CD14-positive monocyte (primary cell): ENCODE measurements at regions of chr7 and their contacts with region 1.

Region 1: DNA sequence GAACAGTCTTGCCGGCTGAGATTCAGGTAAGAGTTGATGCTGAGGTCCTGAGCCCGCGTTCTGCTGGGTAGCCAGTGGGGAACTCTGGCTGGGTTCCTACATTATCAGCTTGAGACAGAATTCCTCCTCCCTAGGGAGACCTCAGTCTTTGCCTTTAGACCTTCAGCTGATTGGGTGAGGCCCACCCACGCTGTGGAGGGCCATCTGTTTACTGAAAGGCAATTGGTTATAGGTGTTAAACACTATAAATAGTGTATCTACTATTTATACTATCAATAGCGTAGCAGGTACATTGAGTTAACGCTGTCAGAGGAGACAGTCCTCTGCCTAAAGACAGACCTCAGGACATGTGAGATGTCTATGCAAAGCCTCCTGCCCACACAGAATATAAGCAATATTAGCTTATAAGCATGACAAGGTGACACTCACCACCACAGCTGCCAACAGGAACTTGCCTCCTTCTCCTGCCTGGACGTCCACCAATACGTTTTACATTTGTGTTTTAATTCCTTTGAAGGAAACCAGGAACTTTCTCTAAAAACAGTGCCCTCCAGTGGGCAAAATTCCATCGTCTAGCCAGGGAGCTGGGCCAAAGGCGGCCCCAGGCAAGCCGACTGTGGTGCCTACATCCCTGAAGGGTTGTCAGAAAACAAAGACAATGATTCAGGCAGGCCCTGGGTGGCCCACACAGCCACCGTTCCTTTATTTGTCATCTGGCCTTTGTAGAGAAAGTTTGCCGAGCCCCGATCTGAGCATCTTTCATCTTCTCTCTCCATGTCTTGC is 58.8 kb downstream of the INSIG1 start:
- DNase-seq: peak in 2 of 3 donors; percentile 21 to 36
- H3K4me3 ChIP-seq: peak overlapping the region in 1 of 3 experiments; percentile 48
- H3K4me3 Mint-ChIP-seq: no peak overlapping the region
- H3K27ac ChIP-seq: peak overlapping the region; percentile 41 to 87
- H3K27ac Mint-ChIP-seq: peak overlapping the region; percentile 87 to 97 (median 94)
- H3K4me1 ChIP-seq: peaks cover 51 to 57% of the 10 kb centered on the region in 2 donors
- H3K4me1 Mint-ChIP-seq: peaks cover 51% of the 10 kb centered on the region
- H3K27me3 ChIP-seq: peaks cover 0 to 2% of the 10 kb centered on the region in 2 donors
- H3K27me3 Mint-ChIP-seq: peaks cover 2 to 8% (median 7%) of the 10 kb centered on the region in 3 donors
- CTCF ChIP-seq: peak; percentile 50

Region 2: DNA sequence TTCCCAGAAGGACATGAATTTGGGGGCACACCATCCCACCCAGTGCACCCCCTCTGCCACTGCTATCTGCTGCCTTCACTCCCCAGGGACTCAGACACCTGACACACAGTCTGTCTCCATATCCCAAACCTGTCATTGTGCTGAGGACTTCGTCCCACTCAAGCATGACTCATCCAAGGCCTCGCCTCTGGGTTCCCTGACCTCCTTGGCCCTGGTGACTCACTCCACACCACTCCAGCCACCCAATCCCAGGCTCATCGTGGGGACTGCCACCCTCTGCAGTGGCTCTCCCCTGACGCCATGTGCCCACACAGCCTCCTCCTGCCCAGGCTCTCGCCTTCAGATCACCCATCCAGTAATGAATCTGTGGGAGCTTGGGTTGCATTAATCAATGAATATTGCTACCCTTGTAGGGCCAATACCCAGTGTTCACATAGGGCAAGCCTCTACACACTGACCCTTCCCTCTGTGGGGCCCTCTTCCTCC is 65.4 kb before region 1 on chr7:
- intact Hi-C with region 1: loop called in 1 of 2 experiments (anchors 5 kb)
- DNase-seq: peak; percentile 74 to 95 (median 79)
- H3K4me3 ChIP-seq: no peak overlapping the region
- H3K4me3 Mint-ChIP-seq: no peak overlapping the region
- H3K27ac ChIP-seq: no peak overlapping the region
- H3K27ac Mint-ChIP-seq: peak overlapping the region in 6 of 7 donors; percentile 44 to 87 (median 73)
- H3K4me1 ChIP-seq: peaks cover 34 to 38% of the 10 kb centered on the region in 2 donors
- H3K4me1 Mint-ChIP-seq: peaks cover 67% of the 10 kb centered on the region
- H3K27me3 ChIP-seq: no peaks in the 10 kb centered on the region
- H3K27me3 Mint-ChIP-seq: peaks cover 1 to 13% (median 8%) of the 10 kb centered on the region in 3 donors
- CTCF ChIP-seq: no peak

Region 3: GRCh38 chr7:155380221-155380861 is 23.8 kb after region 1 on chr7:
- intact Hi-C with region 1: no loop called
- DNase-seq: peak; percentile 58 to 76 (median 74)
- H3K4me3 ChIP-seq: no peak overlapping the region
- H3K4me3 Mint-ChIP-seq: peak overlapping the region in 1 of 2 donors; percentile 99
- H3K27ac ChIP-seq: no peak overlapping the region
- H3K27ac Mint-ChIP-seq: peak overlapping the region in 2 of 7 donors; percentile 12 to 20
- H3K4me1 ChIP-seq: peaks cover 47 to 59% of the 10 kb centered on the region in 2 donors
- H3K4me1 Mint-ChIP-seq: peaks cover 52% of the 10 kb centered on the region
- H3K27me3 ChIP-seq: peaks cover 69 to 91% of the 10 kb centered on the region in 2 donors
- H3K27me3 Mint-ChIP-seq: peaks cover 90 to 98% (median 94%) of the 10 kb centered on the region in 3 donors
- CTCF ChIP-seq: peak; percentile 96

Region 4: DNA sequence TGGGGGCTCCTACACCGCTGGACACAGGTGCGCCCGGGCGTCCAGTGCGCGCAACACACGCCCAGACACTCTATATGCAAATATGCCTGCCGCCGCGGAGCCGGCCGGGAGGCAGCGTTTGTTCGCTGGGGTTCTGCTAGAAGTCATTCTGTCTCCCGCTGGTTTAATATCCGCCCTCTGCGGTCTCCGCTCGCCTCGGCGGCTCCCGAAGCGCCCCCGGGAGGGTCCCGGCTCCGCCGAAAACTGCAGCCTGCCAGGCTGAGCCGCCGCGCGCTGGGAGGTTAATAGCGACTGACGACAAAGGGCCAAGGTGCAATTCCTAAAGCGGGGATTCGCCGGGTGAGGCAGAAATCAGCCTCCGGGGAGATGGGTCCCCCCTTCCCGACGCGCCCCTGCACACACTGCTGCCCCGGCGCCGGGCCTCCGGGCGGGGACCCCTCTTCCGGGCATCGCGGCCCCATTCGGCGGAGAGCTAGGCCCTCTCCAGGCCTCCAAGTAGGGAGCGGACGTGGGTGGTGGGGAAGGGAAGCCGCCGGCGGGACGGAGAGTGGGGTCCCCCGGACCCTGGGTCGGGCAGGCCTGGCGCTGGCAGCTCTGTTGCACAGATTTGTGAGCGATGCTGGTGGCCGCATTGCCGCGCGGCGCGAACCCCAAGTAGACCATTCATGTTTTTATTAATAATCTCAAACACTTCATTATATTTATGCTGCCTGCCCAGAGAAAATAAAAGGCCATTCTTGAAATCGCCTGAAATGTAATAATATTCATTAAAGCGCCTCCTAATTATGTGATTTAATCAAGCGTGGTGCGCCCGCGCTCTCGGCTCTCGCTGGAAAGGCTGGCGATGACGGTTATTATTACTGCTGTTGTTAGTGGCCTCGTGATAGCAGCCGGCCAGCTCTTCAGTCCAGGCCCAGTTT is 110.6 kb after region 1 on chr7:
- intact Hi-C with region 1: no loop called
- DNase-seq: no peak
- H3K4me3 ChIP-seq: no peak overlapping the region
- H3K4me3 Mint-ChIP-seq: peak overlapping the region in 1 of 2 donors; percentile 81
- H3K27ac ChIP-seq: no peak overlapping the region
- H3K27ac Mint-ChIP-seq: no peak overlapping the region
- H3K4me1 ChIP-seq: peaks cover 0 to 8% of the 10 kb centered on the region in 2 donors
- H3K4me1 Mint-ChIP-seq: peaks cover 8% of the 10 kb centered on the region
- H3K27me3 ChIP-seq: peaks cover 84 to 100% of the 10 kb centered on the region in 2 donors
- H3K27me3 Mint-ChIP-seq: peaks cover 97 to 99% (median 98%) of the 10 kb centered on the region in 3 donors
- CTCF ChIP-seq: no peak